Activated CD8-positive, alpha-beta T cell treated with anti-CD3 and anti-CD28 coated beads, Interleukin-2, amount 10 ng/mL, durations not matched to agents 7 days and 5 days (primary cell): ENCODE measurements at regions of chr2 and their contacts with region 1.

Region 1: DNA sequence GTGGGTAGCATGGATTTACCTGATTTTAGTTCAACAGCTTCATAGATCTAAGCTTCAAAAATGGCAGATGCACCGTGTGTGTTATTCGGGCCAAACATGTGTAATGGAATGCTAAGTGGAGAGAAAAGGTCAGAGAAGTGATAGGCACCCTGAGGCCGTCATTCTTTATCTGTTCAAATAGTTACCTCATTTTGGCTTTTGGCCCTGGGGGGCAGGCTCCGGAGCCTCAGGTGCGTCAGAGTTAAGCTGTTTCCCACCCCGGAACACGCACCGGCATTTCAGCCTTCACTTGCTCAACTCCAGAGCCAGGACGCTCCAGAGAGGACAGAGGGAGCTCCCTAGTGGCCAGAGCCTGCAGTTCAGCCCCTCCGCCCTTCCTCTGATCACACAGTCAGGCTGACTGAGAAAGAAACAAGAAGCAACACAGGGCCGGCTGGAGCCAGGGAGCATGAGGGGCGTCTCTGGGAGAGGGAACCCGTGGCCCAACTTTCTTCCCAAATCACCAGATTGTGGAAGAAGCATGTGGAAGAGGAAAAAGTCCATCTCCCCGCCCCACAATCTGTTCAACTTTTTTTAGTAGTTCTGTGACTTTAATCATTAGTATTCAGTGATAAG is 135.2 kb upstream of the EPC2 start:
- DNase-seq: peak; percentile 92
- ATAC-seq: peak; percentile 100
- H3K4me3 Mint-ChIP-seq: peak overlapping the region; percentile 55
- H3K27ac Mint-ChIP-seq: peak overlapping the region; percentile 8
- H3K4me1 Mint-ChIP-seq: peaks cover 24% of the 10 kb centered on the region
- H3K27me3 Mint-ChIP-seq: peaks cover 3% of the 10 kb centered on the region

Region 2: DNA sequence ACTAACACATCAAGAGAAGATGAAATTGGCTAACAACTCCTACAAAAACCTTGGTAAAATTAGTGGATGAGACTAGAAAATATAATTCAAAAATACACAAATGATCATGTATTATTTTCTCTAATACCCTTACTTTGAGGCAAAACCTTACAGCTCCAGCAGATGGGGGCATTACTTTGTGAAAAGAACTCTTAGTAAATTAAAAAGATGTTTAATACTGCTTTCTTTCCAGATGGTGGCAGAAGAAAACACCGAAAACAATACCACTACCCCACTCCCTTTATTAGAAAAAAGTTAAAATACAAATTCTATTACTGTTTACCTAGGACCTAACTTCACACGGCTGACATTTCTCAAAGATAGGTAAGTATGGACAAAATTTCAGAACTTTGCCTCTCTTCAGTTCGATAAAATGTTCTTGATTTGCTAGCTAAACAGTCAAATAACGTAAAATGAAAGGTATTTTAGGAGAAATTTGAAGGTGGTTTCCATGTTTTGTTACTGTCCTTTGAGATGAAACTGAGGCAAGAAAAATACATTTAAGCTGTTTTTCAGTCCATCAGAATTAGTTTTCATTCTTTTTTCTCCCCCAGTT is 519.5 kb before region 1 on chr2:
- CTCF ChIA-PET with region 1: interaction called, 74 read pairs
- POLR2A ChIA-PET with region 1: no interaction called
- DNase-seq: peak; percentile 43
- ATAC-seq: no peak
- H3K4me3 Mint-ChIP-seq: no peak overlapping the region
- H3K27ac Mint-ChIP-seq: no peak overlapping the region
- H3K4me1 Mint-ChIP-seq: peaks cover 10% of the 10 kb centered on the region
- H3K27me3 Mint-ChIP-seq: no peaks in the 10 kb centered on the region

Region 3: GRCh38 chr2:148493822-148494563 is 15.4 kb before region 1 on chr2:
- CTCF ChIA-PET with region 1: interaction called, 18 read pairs
- POLR2A ChIA-PET with region 1: no interaction called
- DNase-seq: no peak
- ATAC-seq: no peak
- H3K4me3 Mint-ChIP-seq: no peak overlapping the region
- H3K27ac Mint-ChIP-seq: no peak overlapping the region
- H3K4me1 Mint-ChIP-seq: no peaks in the 10 kb centered on the region
- H3K27me3 Mint-ChIP-seq: no peaks in the 10 kb centered on the region

Region 4: DNA sequence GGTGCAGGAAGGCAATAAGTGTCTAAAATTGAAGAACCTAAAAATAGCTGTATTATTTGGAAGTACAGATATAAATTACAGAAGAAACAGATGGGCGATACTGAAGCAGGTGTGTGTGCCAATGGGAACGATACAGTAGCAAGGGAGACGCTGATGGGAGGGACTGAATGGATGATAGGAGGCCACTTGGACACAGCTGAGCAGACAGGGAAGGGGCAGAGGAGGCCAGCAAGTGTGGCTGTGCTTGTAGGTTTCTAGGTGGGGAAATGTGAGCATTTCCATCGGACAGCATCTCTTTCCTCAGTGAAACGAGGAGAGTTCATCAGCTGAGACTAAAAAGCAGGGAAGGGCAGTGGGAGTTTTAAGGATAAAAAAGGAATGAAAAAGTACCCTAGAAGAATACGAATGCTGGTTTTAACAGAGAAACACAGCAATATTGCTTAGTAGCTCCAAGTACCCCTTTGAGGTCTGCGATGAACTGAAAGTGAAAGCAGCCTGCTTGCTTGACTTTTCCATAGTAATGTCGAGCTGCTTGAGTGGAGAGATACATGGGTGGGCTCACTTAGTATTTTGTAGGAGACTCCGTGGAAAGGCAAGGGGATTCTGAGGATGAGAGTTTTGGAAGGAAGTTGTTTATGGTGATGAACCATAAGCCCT is 43.4 kb after region 1 on chr2:
- CTCF ChIA-PET with region 1: interaction called, 20 read pairs
- POLR2A ChIA-PET with region 1: interaction called, 6 read pairs
- DNase-seq: peak; percentile 72
- ATAC-seq: peak; percentile 90
- H3K4me3 Mint-ChIP-seq: no peak overlapping the region
- H3K27ac Mint-ChIP-seq: no peak overlapping the region
- H3K4me1 Mint-ChIP-seq: no peaks in the 10 kb centered on the region
- H3K27me3 Mint-ChIP-seq: no peaks in the 10 kb centered on the region

Region 5: GRCh38 chr2:148594198-148594597 is 84.8 kb after region 1 on chr2:
- CTCF ChIA-PET with region 1: no interaction called
- POLR2A ChIA-PET with region 1: no interaction called
- DNase-seq: no peak
- ATAC-seq: no peak
- H3K4me3 Mint-ChIP-seq: no peak overlapping the region
- H3K27ac Mint-ChIP-seq: no peak overlapping the region
- H3K4me1 Mint-ChIP-seq: no peaks in the 10 kb centered on the region
- H3K27me3 Mint-ChIP-seq: no peaks in the 10 kb centered on the region